ENCODE measurements at regions of chr10 and their contacts with region 1.

Region 1: GRCh38 chr10:30453764-30454527 is 20.0 kb downstream of the MAP3K8 start:
- DNase-seq: no peak
- ATAC-seq: no peak
- H3K4me3 ChIP-seq: no peak overlapping the region
- H3K27ac ChIP-seq: no peak overlapping the region
- H3K4me1 ChIP-seq: no peaks in the 10 kb centered on the region
- H3K27me3 ChIP-seq: no peaks in the 10 kb centered on the region
- CTCF ChIP-seq: no peak

Region 2: DNA sequence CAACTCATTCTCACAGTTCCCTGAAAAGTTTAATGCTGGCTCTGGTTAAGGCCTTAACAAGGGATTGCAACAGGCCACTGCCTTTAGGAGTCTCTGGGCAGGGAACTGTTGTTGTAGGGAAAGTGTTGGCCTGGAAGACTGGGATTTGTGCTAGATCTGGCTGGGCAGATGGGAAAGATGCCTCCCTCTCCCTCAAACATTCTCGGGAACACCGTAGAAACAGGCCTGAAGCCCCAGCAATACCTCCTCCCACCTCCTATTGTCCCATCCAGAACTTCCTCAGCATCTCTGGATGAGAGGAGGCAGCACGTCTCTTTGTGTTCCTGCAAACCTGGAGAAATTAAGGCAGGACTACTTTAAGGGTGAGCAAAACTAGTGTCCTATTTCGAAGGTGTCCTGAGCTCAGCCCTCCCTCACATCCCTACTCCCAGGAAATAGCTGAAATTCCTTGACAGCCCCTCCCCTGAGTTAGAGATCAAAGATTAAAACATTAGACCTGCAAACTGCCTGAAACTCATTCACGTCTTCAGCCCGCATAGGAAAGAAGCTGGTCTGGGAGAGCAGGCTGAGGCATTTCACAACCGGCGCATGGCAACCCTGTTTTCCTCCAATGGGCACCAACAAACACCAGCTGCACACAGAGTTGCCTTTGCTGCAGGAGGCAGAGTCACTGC is 30.8 kb before region 1 on chr10:
- CTCF ChIA-PET with region 1: no interaction called
- POLR2A ChIA-PET with region 1: interaction called, 14 read pairs
- intact Hi-C with region 1: no loop called
- DNase-seq: peak; percentile 82
- ATAC-seq: peak; percentile 92
- H3K4me3 ChIP-seq: no peak overlapping the region
- H3K27ac ChIP-seq: peak overlapping the region; percentile 68
- H3K4me1 ChIP-seq: peaks cover 19% of the 10 kb centered on the region
- H3K27me3 ChIP-seq: no peaks in the 10 kb centered on the region
- CTCF ChIP-seq: no peak

Region 3: GRCh38 chr10:30553625-30554439 is 99.9 kb after region 1 on chr10:
- CTCF ChIA-PET with region 1: no interaction called
- POLR2A ChIA-PET with region 1: no interaction called
- intact Hi-C with region 1: no loop called
- DNase-seq: peak; percentile 16
- ATAC-seq: peak; percentile 89
- H3K4me3 ChIP-seq: peak overlapping the region; percentile 37; the same call in 1 of the 2 replicates
- H3K27ac ChIP-seq: no peak overlapping the region
- H3K4me1 ChIP-seq: peaks cover 10% of the 10 kb centered on the region
- H3K27me3 ChIP-seq: no peaks in the 10 kb centered on the region
- CTCF ChIP-seq: no peak

Region 4: GRCh38 chr10:30915146-30915545 is 461.2 kb after region 1 on chr10:
- CTCF ChIA-PET with region 1: no interaction called
- POLR2A ChIA-PET with region 1: no interaction called
- intact Hi-C with region 1: no loop called
- DNase-seq: no peak
- ATAC-seq: no peak
- H3K4me3 ChIP-seq: no peak overlapping the region
- H3K27ac ChIP-seq: no peak overlapping the region
- H3K4me1 ChIP-seq: no peaks in the 10 kb centered on the region
- H3K27me3 ChIP-seq: no peaks in the 10 kb centered on the region
- CTCF ChIP-seq: no peak